ENCODE measurements at regions of chr2 and their contacts with region 1.

Region 1: GRCh38 chr2:237691908-237692600 is 64.7 kb downstream of the LRRFIP1 start:
- DNase-seq: peak; percentile 98
- ATAC-seq: peak; percentile 59
- H3K4me3 Mint-ChIP-seq: peak overlapping the region; percentile 97
- H3K27ac Mint-ChIP-seq: peak overlapping the region; percentile 97
- H3K4me1 Mint-ChIP-seq: peaks cover 64% of the 10 kb centered on the region
- H3K27me3 Mint-ChIP-seq: no peaks in the 10 kb centered on the region

Region 2: DNA sequence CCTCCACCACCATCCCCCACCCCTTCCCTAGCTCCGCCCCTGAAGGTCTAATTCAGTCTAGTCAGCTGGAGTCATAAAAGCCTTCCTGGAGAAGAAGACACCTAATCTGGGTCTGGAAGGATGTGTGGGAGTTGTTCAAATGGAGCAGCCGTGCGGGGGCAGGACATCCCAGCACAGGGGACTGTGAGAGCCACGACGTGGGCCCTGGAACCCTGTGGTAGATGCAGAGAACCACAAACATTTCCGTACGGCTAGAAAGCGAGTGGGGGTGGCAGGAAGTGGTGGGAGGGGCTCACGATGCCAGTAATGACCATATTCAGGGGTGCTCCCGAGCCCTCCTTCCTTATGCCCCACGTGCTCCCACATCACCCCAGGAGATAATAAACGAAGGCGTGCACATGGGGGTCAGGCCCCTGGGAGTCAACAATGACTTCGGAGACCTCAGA is 257.2 kb before region 1 on chr2:
- CTCF ChIA-PET with region 1: no interaction called
- POLR2A ChIA-PET with region 1: interaction called, 3 read pairs
- intact Hi-C with region 1: loop called in 1 of 2 experiments (anchors 5 kb)
- DNase-seq: peak; percentile 91
- ATAC-seq: peak; percentile 38
- H3K4me3 Mint-ChIP-seq: peak overlapping the region; percentile 74
- H3K27ac Mint-ChIP-seq: peak overlapping the region; percentile 95
- H3K4me1 Mint-ChIP-seq: peaks cover 97% of the 10 kb centered on the region
- H3K27me3 Mint-ChIP-seq: no peaks in the 10 kb centered on the region

Region 3: GRCh38 chr2:237650455-237650850 is 41.6 kb before region 1 on chr2:
- CTCF ChIA-PET with region 1: no interaction called
- POLR2A ChIA-PET with region 1: no interaction called
- intact Hi-C with region 1: no loop called
- DNase-seq: no peak
- ATAC-seq: no peak
- H3K4me3 Mint-ChIP-seq: no peak overlapping the region
- H3K27ac Mint-ChIP-seq: no peak overlapping the region
- H3K4me1 Mint-ChIP-seq: peaks cover 7% of the 10 kb centered on the region
- H3K27me3 Mint-ChIP-seq: peaks cover 1% of the 10 kb centered on the region

Region 4: GRCh38 chr2:237731663-237732062 is 39.6 kb after region 1 on chr2:
- CTCF ChIA-PET with region 1: interaction called, 4 read pairs
- POLR2A ChIA-PET with region 1: interaction called, 7 read pairs
- intact Hi-C with region 1: loop called in 1 of 2 experiments (anchors 1 kb)
- DNase-seq: peak; percentile 77
- ATAC-seq: peak; percentile 98
- H3K4me3 Mint-ChIP-seq: peak overlapping the region; percentile 43
- H3K27ac Mint-ChIP-seq: peak overlapping the region; percentile 96
- H3K4me1 Mint-ChIP-seq: peaks cover 64% of the 10 kb centered on the region
- H3K27me3 Mint-ChIP-seq: no peaks in the 10 kb centered on the region

Region 5: GRCh38 chr2:237998530-237998929 is 306.5 kb after region 1 on chr2:
- CTCF ChIA-PET with region 1: interaction called, 3 read pairs
- POLR2A ChIA-PET with region 1: no interaction called
- intact Hi-C with region 1: loop called in 1 of 2 experiments (anchors 1 kb)
- DNase-seq: peak; percentile 71
- ATAC-seq: peak; percentile 91
- H3K4me3 Mint-ChIP-seq: peak overlapping the region; percentile 53
- H3K27ac Mint-ChIP-seq: peak overlapping the region; percentile 97
- H3K4me1 Mint-ChIP-seq: peaks cover 65% of the 10 kb centered on the region
- H3K27me3 Mint-ChIP-seq: no peaks in the 10 kb centered on the region

Region 6: GRCh38 chr2:238288650-238289573 is 596.9 kb after region 1 on chr2:
- CTCF ChIA-PET with region 1: no interaction called
- POLR2A ChIA-PET with region 1: interaction called, 7 read pairs
- intact Hi-C with region 1: loop called (anchors 2 to 10 kb)
- DNase-seq: peak; percentile 98
- ATAC-seq: peak; percentile 86
- H3K4me3 Mint-ChIP-seq: peak overlapping the region; percentile 74
- H3K27ac Mint-ChIP-seq: peak overlapping the region; percentile 82
- H3K4me1 Mint-ChIP-seq: peaks cover 32% of the 10 kb centered on the region
- H3K27me3 Mint-ChIP-seq: no peaks in the 10 kb centered on the region